Activated CD8-positive, alpha-beta T cell treated with anti-CD3 and anti-CD28 coated beads for 36 hours (primary cell): ENCODE measurements at regions of chr3 and their contacts with region 1.

Region 1: GRCh38 chr3:51953445-51953844 is 1.7 kb upstream of the GPR62 start:
- DNase-seq: no peak
- ATAC-seq: no peak
- H3K4me3 Mint-ChIP-seq: no peak overlapping the region
- H3K27ac Mint-ChIP-seq: no peak overlapping the region
- H3K4me1 Mint-ChIP-seq: peaks cover 6% of the 10 kb centered on the region
- H3K27me3 Mint-ChIP-seq: peaks cover 28% of the 10 kb centered on the region
- CTCF ChIP-seq: no peak

Region 2: DNA sequence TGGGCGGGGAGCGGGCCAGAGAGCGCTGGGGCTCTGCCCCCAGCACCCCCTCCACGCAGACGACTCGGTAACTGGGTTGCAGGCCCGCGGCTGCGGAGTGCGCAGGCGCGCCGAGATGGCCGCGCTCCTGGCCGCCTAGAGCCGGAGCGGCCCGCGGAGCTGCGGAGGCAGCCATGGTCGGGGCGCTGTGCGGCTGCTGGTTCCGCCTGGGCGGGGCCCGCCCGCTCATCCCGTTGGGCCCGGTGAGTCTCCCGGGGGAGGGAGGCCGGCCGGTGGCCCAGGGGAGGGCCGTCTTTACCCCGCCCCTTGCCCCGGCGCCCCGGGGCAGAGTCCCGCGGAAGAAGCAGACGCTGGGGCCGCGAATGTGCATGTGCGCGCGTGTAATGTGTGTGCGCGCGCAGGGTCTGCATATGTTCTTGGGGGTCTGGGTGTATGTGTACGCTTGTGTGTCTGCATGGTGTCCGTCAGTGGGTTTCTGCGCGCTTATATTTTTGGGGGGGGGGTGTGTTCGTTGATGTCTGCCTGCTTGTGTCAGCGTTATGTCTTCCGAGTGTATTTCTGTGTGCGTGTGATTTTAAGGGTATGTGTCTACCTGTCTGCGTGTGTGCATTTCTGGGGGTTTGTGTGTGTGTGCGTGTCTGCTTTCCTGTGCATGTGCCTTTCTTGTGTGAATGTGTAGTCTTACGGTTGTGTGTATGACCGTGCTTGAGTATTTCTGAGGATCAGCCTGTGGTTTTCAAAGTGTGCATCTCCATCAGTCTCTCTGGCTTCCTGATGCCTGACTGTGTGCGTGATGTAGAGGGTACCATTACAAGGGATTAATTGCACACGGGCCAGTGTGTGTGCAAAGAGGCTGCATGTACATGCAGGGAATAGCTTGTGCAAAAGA is 21.8 kb after region 1 on chr3 and contains the start of gene ABHD14A:
- CTCF ChIA-PET with region 1: interaction called, 13 read pairs
- POLR2A ChIA-PET with region 1: interaction called, 6 read pairs
- intact Hi-C with region 1: no loop called
- DNase-seq: peak; percentile 67
- ATAC-seq: peak; percentile 77
- H3K4me3 Mint-ChIP-seq: peak within 1 kb of the TSS; percentile 77
- H3K27ac Mint-ChIP-seq: peak within 1 kb of the TSS; percentile 97
- H3K4me1 Mint-ChIP-seq: peaks cover 31% of the 10 kb centered on the region
- H3K27me3 Mint-ChIP-seq: no peaks in the 10 kb centered on the region
- CTCF ChIP-seq: no peak
- total RNA-seq, gene ABHD14A: 8.9 to 9.5 TPM

Region 3: GRCh38 chr3:52046186-52046913 is 92.9 kb after region 1 on chr3:
- CTCF ChIA-PET with region 1: no interaction called
- POLR2A ChIA-PET with region 1: no interaction called
- intact Hi-C with region 1: no loop called
- DNase-seq: no peak
- ATAC-seq: no peak
- H3K4me3 Mint-ChIP-seq: no peak overlapping the region
- H3K27ac Mint-ChIP-seq: peak overlapping the region; percentile 1
- H3K4me1 Mint-ChIP-seq: peaks cover 14% of the 10 kb centered on the region
- H3K27me3 Mint-ChIP-seq: no peaks in the 10 kb centered on the region
- CTCF ChIP-seq: no peak